MCF 10A (cell line): ENCODE measurements at regions of chr9 and their contacts with region 1.

Region 1: DNA sequence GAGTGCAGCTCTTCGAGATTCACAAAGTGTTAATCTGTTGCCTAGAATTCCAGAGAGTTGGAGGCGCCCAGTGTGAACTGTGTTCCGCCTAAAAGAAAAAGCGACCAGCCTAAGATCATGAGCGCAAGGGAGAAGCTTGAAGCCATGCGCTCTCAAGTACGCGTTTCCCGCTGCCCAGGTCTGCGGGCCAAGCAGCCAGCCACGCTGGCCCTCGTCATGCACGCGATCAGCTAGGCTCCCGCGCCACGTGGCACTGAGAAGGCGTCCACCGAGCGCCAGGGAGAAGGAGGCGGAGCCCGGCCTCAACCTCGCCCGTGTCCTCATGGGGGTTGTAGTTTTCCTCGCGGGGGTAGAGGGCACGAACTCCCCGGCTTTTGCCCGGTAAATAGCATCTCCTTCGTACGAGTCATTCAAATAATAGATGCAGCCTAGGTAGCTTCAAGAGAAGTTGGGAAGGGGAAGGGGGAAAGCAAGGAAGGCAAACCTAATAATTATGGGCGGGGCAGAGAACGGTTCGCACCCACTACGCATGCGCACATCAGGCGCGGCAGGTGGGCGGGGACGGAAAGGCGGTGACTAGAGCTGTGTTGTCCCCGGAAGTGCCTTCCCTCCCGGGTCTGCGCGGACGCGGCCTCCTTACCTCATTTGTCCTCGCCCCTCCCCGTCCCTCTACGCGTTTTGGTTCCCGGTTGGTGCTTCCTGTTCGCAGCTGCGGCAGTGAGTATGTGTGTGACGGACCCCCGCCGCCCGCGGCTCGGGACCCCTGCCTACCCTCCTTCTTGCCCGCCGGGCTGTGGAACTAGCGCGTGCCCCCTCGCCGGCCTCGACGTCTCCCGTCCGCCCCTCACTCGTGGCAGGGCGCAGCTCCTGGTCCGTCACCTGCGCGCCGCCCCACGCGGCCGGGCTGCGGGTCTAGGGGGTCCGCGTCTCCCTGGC is at the start of gene ZCCHC7:
- DNase-seq: peak; percentile 95
- H3K4me3 Mint-ChIP-seq: peak within 1 kb of the TSS; percentile 80
- H3K27ac Mint-ChIP-seq: peak within 1 kb of the TSS; percentile 95
- H3K4me1 Mint-ChIP-seq: peaks cover 17% of the 10 kb centered on the region
- H3K27me3 Mint-ChIP-seq: no peaks in the 10 kb centered on the region
- CTCF ChIP-seq: no peak
- total RNA-seq, gene ZCCHC7: 34.0 and 41.7 TPM in 2 replicates

Region 2: DNA sequence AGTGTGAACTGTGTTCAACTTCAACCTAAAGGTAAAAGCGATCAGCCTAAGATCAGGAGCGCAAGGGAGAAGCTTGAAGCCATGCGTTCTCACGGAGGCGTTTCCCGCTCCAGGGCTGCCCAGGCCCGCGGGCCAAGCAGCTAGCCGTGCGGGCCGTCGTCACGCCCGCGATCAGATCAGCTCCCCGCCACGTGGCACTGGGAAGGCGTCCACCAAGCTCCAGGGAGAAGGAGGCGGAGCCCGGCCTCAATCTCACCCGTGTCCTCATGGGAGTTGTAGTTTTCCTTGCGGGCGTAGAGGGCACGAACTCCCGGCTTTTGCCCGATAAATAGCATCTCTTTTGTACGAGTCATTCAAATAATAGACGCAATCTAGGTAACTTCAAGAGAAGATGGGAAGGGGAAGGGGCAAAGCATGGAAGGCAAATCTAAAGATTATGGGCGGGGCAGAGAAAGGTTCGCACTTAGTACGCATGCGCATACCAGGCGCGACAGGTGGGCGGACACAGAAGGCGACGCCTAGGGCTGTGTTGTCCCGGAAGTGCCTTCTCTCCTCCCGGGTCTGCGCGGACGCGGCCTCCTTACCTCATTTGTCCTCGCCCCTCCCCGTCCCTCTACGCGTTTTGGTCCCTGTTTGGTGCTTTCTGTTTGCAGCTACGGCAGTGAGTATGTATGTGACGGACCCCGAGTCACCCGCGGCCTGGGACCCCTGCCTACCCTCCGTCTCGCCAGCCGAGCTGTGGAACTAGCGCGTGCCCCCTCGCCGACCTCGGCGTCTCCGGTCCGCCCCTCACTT is 40.6 kb before region 1 on chr9:
- CTCF ChIA-PET with region 1: interaction called, 3 read pairs
- POLR2A ChIA-PET with region 1: interaction called, 63 read pairs
- intact Hi-C with region 1: loop called (anchors 2 kb)
- DNase-seq: peak; percentile 95
- H3K4me3 Mint-ChIP-seq: peak overlapping the region; percentile 88
- H3K27ac Mint-ChIP-seq: peak overlapping the region; percentile 93
- H3K4me1 Mint-ChIP-seq: peaks cover 17% of the 10 kb centered on the region
- H3K27me3 Mint-ChIP-seq: no peaks in the 10 kb centered on the region
- CTCF ChIP-seq: no peak

Region 3: GRCh38 chr9:37144762-37145161 is 24.6 kb after region 1 on chr9:
- CTCF ChIA-PET with region 1: no interaction called
- POLR2A ChIA-PET with region 1: interaction called, 20 read pairs
- intact Hi-C with region 1: no loop called
- DNase-seq: peak; percentile 1
- H3K4me3 Mint-ChIP-seq: no peak overlapping the region
- H3K27ac Mint-ChIP-seq: no peak overlapping the region
- H3K4me1 Mint-ChIP-seq: peaks cover under 1% of the 10 kb centered on the region
- H3K27me3 Mint-ChIP-seq: no peaks in the 10 kb centered on the region
- CTCF ChIP-seq: no peak

Region 4: GRCh38 chr9:37197158-37198038 is 77.2 kb after region 1 on chr9:
- CTCF ChIA-PET with region 1: no interaction called
- POLR2A ChIA-PET with region 1: no interaction called
- intact Hi-C with region 1: no loop called
- DNase-seq: peak; percentile 33
- H3K4me3 Mint-ChIP-seq: peak overlapping the region; percentile 4
- H3K27ac Mint-ChIP-seq: peak overlapping the region; percentile 67
- H3K4me1 Mint-ChIP-seq: peaks cover 41% of the 10 kb centered on the region
- H3K27me3 Mint-ChIP-seq: no peaks in the 10 kb centered on the region
- CTCF ChIP-seq: no peak

Region 5: GRCh38 chr9:37209431-37210386 is 89.5 kb after region 1 on chr9:
- CTCF ChIA-PET with region 1: no interaction called
- POLR2A ChIA-PET with region 1: interaction called, 14 read pairs
- intact Hi-C with region 1: loop called (anchors 5 kb)
- DNase-seq: no peak
- H3K4me3 Mint-ChIP-seq: no peak overlapping the region
- H3K27ac Mint-ChIP-seq: peak overlapping the region; percentile 69
- H3K4me1 Mint-ChIP-seq: no peaks in the 10 kb centered on the region
- H3K27me3 Mint-ChIP-seq: no peaks in the 10 kb centered on the region
- CTCF ChIP-seq: no peak